ENCODE measurements at regions of chr2 and their contacts with region 1.

Region 1: GRCh38 chr2:231394211-231395141 is 1.0 kb upstream of the B3GNT7 start:
- DNase-seq: peak in 1 of 5 donors; percentile 47
- H3K4me3 ChIP-seq: no peak overlapping the region
- H3K27ac ChIP-seq: no peak overlapping the region
- H3K4me1 ChIP-seq: peaks cover 6% of the 10 kb centered on the region
- H3K27me3 ChIP-seq: no peaks in the 10 kb centered on the region
- CTCF ChIP-seq: no peak
- EP300 ChIP-seq: no peak
- POLR2A ChIP-seq: no peak

Region 2: GRCh38 chr2:231308631-231309428 is 85.6 kb before region 1 on chr2:
- intact Hi-C with region 1: loop called in 1 of 4 experiments (anchors 10 kb)
- DNase-seq: peak in 1 of 5 donors; percentile 9
- H3K4me3 ChIP-seq: no peak overlapping the region
- H3K27ac ChIP-seq: no peak overlapping the region
- H3K4me1 ChIP-seq: no peaks in the 10 kb centered on the region
- H3K27me3 ChIP-seq: no peaks in the 10 kb centered on the region
- CTCF ChIP-seq: no peak
- EP300 ChIP-seq: no peak
- POLR2A ChIP-seq: no peak

Region 3: DNA sequence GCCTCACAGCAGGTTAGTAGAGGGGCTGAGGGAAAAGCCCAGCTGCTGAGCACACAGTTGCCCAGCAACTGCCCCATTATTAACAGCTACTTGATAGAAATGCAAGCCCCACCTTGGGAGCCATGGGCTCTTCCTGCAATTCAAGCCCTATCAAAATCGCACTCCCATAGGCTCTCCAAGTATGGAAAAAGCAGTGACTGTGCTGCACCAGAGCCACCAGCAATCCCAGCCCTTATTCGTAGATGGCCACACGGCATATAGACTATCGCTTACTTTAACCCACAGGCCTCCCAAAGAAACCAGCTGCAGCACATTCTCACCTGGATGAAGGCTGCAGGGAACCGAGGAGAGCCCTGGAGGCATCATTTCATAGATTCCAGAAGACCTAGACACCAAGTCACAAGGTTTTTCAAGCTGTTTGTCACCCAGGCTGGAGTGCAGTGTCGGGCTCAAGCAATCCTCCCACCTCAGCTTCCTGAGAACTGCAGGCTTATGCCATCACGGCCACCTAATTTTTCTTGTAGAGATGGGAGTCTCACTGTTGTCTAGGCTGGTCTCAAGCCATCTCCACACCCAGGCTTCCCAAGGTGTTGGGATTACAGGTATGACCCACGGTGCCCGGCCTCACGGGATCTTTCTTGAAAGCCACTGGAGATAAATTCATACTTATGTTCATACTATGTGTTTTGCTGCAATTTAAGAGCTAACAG is 58.5 kb after region 1 on chr2:
- intact Hi-C with region 1: no loop called
- DNase-seq: no peak
- H3K4me3 ChIP-seq: no peak overlapping the region
- H3K27ac ChIP-seq: no peak overlapping the region
- H3K4me1 ChIP-seq: no peaks in the 10 kb centered on the region
- H3K27me3 ChIP-seq: no peaks in the 10 kb centered on the region
- CTCF ChIP-seq: no peak
- EP300 ChIP-seq: no peak
- POLR2A ChIP-seq: no peak

Measured in ovary (tissue), 10 donors.